A673 (cell line): ENCODE measurements at regions of chr2 and their contacts with region 1.

Region 1: GRCh38 chr2:120174963-120175581 is 48.1 kb downstream of the TMEM185B start:
- DNase-seq: peak; percentile 76
- H3K4me3 ChIP-seq: no peak overlapping the region
- H3K27ac ChIP-seq: no peak overlapping the region
- H3K4me1 ChIP-seq: no peaks in the 10 kb centered on the region
- H3K27me3 ChIP-seq: no peaks in the 10 kb centered on the region
- CTCF ChIP-seq: peak; percentile 76

Region 2: DNA sequence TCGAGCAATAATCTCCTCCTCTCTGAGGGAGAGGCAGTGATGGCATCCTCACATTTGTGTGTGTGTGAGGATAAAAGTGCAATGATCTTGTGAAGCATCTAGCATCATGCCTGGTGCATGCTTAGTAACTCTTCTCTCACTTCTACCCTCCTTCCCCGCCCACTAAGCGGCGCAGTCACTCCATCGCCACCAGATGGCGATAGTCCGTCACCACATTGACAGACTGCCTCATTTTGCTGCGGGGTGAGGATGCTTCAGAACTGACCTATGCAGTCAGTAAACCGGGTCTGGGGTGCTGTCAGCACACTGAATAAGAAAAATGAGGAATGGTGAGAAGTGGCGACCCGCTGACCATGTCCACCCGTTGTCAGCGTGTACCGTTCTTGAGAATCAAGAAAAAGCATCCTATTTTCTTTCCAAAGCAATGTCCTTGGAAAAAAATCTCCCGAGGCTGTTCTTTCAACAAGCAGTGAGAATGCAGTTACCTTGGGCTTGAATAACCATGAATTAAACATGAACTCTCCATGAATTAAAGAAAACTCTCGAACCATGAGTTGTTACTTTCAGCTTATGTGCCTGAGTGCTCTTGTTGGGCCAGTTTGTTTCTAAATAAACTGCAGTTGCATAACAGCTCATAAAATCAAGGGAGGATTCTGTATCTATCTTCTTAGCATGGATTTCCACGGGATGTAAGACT is 533.4 kb before region 1 on chr2:
- CTCF ChIA-PET with region 1: interaction called, 4 read pairs
- POLR2A ChIA-PET with region 1: no interaction called
- intact Hi-C with region 1: loop called (anchors 5 kb)
- DNase-seq: peak; percentile 81
- H3K4me3 ChIP-seq: no peak overlapping the region
- H3K27ac ChIP-seq: no peak overlapping the region
- H3K4me1 ChIP-seq: no peaks in the 10 kb centered on the region
- H3K27me3 ChIP-seq: no peaks in the 10 kb centered on the region
- CTCF ChIP-seq: peak; percentile 97

Region 3: GRCh38 chr2:119702918-119703401 is 472.1 kb before region 1 on chr2:
- CTCF ChIA-PET with region 1: interaction called, 13 read pairs
- POLR2A ChIA-PET with region 1: no interaction called
- intact Hi-C with region 1: loop called (anchors 1 kb)
- DNase-seq: peak; percentile 74
- H3K4me3 ChIP-seq: no peak overlapping the region
- H3K27ac ChIP-seq: no peak overlapping the region
- H3K4me1 ChIP-seq: peaks cover 5% of the 10 kb centered on the region
- H3K27me3 ChIP-seq: no peaks in the 10 kb centered on the region
- CTCF ChIP-seq: peak; percentile 95

Region 4: DNA sequence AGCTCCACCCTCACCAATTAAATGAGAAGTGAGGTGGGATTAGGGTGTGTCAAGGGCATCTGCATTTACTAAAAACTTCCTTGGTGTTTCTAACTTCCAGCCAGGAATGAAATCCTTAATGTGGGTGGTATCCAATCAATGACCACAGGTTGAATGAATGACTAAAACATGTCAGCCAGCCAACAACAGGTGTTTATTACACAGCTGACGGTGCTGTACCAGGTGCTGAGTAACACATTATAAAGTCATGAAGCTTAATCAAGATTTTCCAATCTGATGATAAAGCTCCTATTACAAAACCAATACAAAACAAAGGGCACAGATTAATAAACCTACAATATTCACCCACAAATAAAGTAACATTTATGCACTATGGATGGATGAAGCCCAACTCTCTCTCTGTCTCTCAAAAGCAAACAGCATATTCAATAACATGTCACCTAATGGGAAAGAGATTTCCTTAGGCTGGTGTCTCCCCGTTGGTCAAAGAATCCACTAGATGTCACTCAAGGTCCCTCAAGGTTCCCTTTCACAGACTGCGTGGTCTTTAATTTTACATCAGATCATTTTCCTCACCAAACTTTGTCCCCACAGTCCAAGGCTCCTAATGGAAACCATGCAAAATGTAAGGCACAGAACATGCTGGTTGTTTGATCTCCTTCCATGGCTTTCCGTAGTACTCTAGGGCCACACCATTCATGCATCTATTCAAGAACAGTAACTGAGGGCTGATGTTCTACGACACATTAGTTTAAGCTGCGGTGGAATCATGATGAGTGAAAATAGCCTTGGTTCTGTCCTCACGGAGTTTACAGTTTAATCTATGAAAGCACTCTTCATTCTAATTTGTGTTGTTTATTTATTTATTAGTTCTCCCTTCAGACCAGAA is 421.8 kb before region 1 on chr2:
- CTCF ChIA-PET with region 1: no interaction called
- POLR2A ChIA-PET with region 1: no interaction called
- intact Hi-C with region 1: loop called (anchors 2 kb)
- DNase-seq: peak; percentile 75
- H3K4me3 ChIP-seq: no peak overlapping the region
- H3K27ac ChIP-seq: no peak overlapping the region
- H3K4me1 ChIP-seq: no peaks in the 10 kb centered on the region
- H3K27me3 ChIP-seq: no peaks in the 10 kb centered on the region
- CTCF ChIP-seq: peak; percentile 77

Region 5: GRCh38 chr2:119826370-119826961 is 348.6 kb before region 1 on chr2:
- CTCF ChIA-PET with region 1: no interaction called
- POLR2A ChIA-PET with region 1: no interaction called
- intact Hi-C with region 1: loop called (anchors 10 kb)
- DNase-seq: peak; percentile 84
- H3K4me3 ChIP-seq: no peak overlapping the region
- H3K27ac ChIP-seq: peak overlapping the region; percentile 0
- H3K4me1 ChIP-seq: peaks cover 12% of the 10 kb centered on the region
- H3K27me3 ChIP-seq: no peaks in the 10 kb centered on the region
- CTCF ChIP-seq: peak; percentile 81

Region 6: DNA sequence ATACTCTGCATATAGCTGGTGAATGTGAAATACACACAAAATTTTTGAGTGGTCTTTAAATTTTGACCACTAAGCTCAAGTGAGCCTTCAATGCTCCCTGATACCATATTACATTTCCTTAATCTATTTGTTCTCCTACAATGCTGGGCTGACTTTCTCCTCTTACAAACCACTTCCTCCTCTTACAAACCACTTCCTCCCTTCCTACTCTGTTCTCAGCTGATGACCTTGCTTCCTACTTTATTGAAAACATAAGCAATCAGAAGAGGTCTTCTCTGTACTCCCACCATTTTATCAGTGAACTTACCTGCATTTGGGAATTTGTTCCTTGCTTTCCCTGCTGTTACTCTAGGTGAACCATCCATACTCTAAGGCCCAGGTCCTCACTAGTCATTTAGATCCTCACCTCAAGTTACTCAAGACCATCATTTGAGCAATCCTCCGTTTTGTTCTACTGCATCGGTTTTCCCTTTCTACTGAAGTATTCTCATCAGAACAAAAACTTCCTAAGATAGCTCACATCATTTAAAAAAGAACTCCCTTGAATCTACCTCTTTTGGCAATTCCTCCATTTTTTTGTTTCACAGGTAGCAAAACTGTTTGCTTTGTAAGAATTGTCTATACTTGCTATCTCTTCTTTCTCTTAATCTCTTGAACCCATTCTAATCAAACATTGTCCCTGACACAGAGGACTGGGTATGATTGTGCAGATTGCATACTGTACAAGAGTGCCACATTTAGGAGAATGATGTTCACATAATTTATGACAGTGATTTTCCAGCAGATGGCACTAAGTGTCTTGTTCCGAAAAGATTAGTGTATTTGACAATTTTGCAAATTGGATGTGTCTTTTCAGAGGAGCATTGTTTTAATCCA is 65.6 kb before region 1 on chr2:
- CTCF ChIA-PET with region 1: interaction called, 4 read pairs
- POLR2A ChIA-PET with region 1: no interaction called
- intact Hi-C with region 1: loop called (anchors 5 kb)
- DNase-seq: peak; percentile 57
- H3K4me3 ChIP-seq: no peak overlapping the region
- H3K27ac ChIP-seq: no peak overlapping the region
- H3K4me1 ChIP-seq: no peaks in the 10 kb centered on the region
- H3K27me3 ChIP-seq: no peaks in the 10 kb centered on the region
- CTCF ChIP-seq: peak; percentile 74

Region 7: GRCh38 chr2:120312861-120313694 is 138.0 kb after region 1 on chr2:
- CTCF ChIA-PET with region 1: interaction called, 12 read pairs
- POLR2A ChIA-PET with region 1: no interaction called
- intact Hi-C with region 1: no loop called
- DNase-seq: peak; percentile 85
- H3K4me3 ChIP-seq: peak overlapping the region; percentile 50
- H3K27ac ChIP-seq: no peak overlapping the region
- H3K4me1 ChIP-seq: no peaks in the 10 kb centered on the region
- H3K27me3 ChIP-seq: no peaks in the 10 kb centered on the region
- CTCF ChIP-seq: peak; percentile 94

Region 8: DNA sequence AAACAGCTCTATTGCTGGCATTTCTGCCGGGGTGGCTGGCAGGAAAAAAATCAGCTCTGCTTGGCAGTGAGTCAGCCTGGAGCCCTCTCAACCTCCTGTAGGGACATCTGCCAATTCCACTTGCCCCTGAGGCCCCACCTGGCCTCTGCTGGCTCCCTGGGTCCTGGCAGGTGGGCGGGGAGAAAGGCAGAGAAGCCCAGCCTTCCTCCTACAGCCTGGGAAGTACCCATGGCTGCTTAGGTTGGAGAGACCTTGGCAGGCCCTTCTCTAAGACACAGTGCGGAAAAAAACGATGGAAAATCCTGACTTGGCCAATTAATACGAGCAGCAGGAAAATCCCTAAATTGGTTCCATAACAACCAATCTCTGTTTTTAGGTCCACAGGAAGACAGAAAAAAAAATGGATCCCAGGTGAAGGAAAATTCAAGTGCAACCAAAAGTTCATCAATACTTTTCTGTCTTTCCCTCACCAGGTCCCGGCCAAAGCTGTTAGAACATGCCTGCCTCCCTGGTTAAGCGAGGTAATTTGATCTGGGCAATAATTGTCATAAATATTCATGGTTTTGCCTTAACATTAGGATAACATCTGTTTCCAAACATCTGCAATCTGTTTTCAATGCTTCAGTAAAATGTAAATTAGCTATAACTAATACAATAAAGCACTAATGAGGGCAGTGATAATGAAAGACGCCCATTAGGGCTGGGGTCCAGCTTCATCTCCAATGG is 864.0 kb after region 1 on chr2:
- CTCF ChIA-PET with region 1: no interaction called
- POLR2A ChIA-PET with region 1: no interaction called
- intact Hi-C with region 1: no loop called
- DNase-seq: peak; percentile 48
- H3K4me3 ChIP-seq: no peak overlapping the region
- H3K27ac ChIP-seq: no peak overlapping the region
- H3K4me1 ChIP-seq: peaks cover 12% of the 10 kb centered on the region
- H3K27me3 ChIP-seq: no peaks in the 10 kb centered on the region
- CTCF ChIP-seq: no peak